ENCODE measurements at regions of chr6 and their contacts with region 1.

Region 1: DNA sequence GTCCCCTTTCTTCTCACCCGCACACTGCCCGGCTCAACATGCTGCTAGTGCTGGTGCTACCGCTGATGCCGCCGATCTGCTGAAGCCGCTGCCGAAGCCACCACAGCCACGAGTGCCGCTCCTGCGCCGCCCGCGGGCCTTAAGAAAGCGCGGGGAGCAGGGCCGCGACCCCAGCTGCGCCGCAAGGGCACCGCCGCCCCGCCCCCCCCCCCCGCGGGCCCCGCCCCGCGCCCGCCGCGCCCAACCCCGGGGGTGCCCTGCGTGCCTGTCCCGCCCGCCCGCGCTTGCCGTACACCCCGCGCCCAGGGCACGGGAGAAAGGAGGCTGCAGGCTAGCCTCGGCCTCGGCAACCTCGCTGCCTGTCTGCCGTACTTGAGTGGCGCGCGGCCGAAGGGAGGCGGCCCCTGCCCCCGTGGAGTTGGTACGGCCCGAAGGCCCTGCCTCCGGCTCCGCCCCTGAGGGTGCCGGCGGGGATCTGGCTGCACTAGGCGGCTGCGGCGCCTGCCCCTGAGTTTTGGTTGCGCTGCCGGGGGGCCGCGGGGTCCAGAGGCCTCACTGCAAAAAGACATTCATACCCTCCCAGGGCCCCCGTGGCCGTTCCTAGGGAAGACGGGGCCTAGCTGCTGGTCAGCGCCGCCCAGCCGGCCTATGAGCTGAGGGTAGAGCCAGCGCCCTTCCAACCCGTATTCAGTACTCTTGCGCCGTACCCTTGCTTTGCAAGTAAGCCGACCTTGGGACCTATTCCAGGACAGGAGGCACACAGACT is at the start of gene SOD2:
- DNase-seq: no peak
- ATAC-seq: peak; percentile 86
- H3K4me3 ChIP-seq: peak within 1 kb of the TSS; percentile 78
- H3K27ac ChIP-seq: peak within 1 kb of the TSS; percentile 88
- H3K4me1 ChIP-seq: peaks cover 10% of the 10 kb centered on the region
- H3K27me3 ChIP-seq: no peaks in the 10 kb centered on the region
- CTCF ChIP-seq: peak in 1 of 3 experiments; percentile 5; a peak in 1 of 6 replicates
- EP300 ChIP-seq: no peak
- POLR2A ChIP-seq: peak; percentile 96
- RAD21 ChIP-seq: no peak
- polyA plus RNA-seq, gene SOD2: 12.1 to 20.9 TPM

Region 2: DNA sequence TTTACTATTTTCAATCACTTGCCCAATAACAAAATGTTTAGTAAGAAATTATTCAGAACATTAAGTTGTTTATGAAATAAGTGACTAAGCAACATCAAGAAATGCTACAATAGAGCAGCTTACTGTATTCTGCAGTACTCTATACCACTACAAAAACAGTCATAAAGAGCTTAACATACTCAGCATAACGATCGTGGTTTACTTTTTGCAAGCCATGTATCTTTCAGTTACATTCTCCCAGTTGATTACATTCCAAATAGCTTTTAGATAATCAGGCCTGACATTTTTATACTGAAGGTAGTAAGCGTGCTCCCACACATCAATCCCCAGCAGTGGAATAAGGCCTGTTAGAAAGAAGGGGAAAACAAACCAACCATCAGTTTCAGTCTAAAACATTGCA is 11.0 kb before region 1 on chr6:
- CTCF ChIA-PET with region 1: interaction called, 10 read pairs
- POLR2A ChIA-PET with region 1: no interaction called
- RAD21 ChIA-PET with region 1: interaction called, 3 read pairs
- SMC1A ChIA-PET with region 1: interaction called, 9 read pairs
- in situ Hi-C with region 1: no loop called
- intact Hi-C with region 1: no loop called
- DNase-seq: no peak
- ATAC-seq: 0 out of 3 replicates have a peak, but pooled peaks have one; percentile 24
- H3K4me3 ChIP-seq: no peak overlapping the region
- H3K27ac ChIP-seq: no peak overlapping the region
- H3K4me1 ChIP-seq: no peaks in the 10 kb centered on the region
- H3K27me3 ChIP-seq: no peaks in the 10 kb centered on the region
- CTCF ChIP-seq: no peak
- EP300 ChIP-seq: no peak
- POLR2A ChIP-seq: no peak
- RAD21 ChIP-seq: no peak

Region 3: GRCh38 chr6:159726918-159727716 is 33.8 kb after region 1 on chr6 and contains the start of gene WTAP:
- CTCF ChIA-PET with region 1: interaction called, 27 read pairs
- POLR2A ChIA-PET with region 1: interaction called, 16 read pairs
- RAD21 ChIA-PET with region 1: interaction called, 6 read pairs
- SMC1A ChIA-PET with region 1: interaction called, 15 read pairs
- in situ Hi-C with region 1: no loop called
- intact Hi-C with region 1: loop called (anchors 2 kb)
- DNase-seq: peak; percentile 89
- ATAC-seq: peak; percentile 86
- H3K4me3 ChIP-seq: peak within 1 kb of the TSS; percentile 91
- H3K27ac ChIP-seq: peak within 1 kb of the TSS; percentile 97
- H3K4me1 ChIP-seq: no peaks in the 10 kb centered on the region
- H3K27me3 ChIP-seq: no peaks in the 10 kb centered on the region
- CTCF ChIP-seq: no peak
- EP300 ChIP-seq: no peak
- POLR2A ChIP-seq: peak; percentile 95
- RAD21 ChIP-seq: no peak
- polyA plus RNA-seq, gene WTAP: 102 to 132 TPM

Region 4: GRCh38 chr6:159789377-159790148 is 96.3 kb after region 1 on chr6 and contains the start of gene TCP1:
- CTCF ChIA-PET with region 1: interaction called, 46 read pairs
- POLR2A ChIA-PET with region 1: interaction called, 5 read pairs
- RAD21 ChIA-PET with region 1: interaction called, 10 read pairs
- SMC1A ChIA-PET with region 1: interaction called, 10 read pairs
- in situ Hi-C with region 1: no loop called
- intact Hi-C with region 1: loop called (anchors 2 kb)
- DNase-seq: peak; percentile 99
- ATAC-seq: peak; percentile 86
- H3K4me3 ChIP-seq: peak within 1 kb of the TSS; percentile 90
- H3K27ac ChIP-seq: peak within 1 kb of the TSS; percentile 87
- H3K4me1 ChIP-seq: no peaks in the 10 kb centered on the region; the same call in 1 of the 2 replicates
- H3K27me3 ChIP-seq: no peaks in the 10 kb centered on the region
- CTCF ChIP-seq: no peak
- EP300 ChIP-seq: peak in 1 of 2 experiments; percentile 88; a peak in 1 of 4 replicates
- POLR2A ChIP-seq: peak; percentile 99
- RAD21 ChIP-seq: no peak
- polyA plus RNA-seq, gene TCP1: 201 to 241 TPM

Region 5: DNA sequence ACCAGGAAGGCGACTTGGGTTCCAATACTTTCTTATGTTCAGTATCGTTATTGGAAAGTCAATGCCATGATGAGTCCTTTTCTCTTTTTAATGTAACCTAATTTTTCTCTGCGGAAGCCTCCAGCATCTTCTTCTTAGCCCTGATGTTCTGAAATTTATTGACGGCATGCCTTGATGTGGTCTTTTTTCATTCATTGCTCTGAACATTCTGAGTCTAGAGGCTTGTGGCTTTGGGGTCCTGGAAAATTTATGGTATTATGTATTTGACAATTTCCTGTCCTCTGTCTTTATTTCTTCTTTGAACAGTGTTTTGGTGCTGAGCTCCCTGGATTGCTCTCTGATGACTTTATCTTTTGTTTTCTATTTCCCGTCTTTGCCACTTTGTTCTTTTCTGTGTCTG is 168.8 kb after region 1 on chr6:
- CTCF ChIA-PET with region 1: interaction called, 8 read pairs
- POLR2A ChIA-PET with region 1: no interaction called
- RAD21 ChIA-PET with region 1: interaction called, 13 read pairs
- SMC1A ChIA-PET with region 1: interaction called, 8 read pairs
- in situ Hi-C with region 1: no loop called
- intact Hi-C with region 1: no loop called
- DNase-seq: no peak
- ATAC-seq: no peak
- H3K4me3 ChIP-seq: no peak overlapping the region
- H3K27ac ChIP-seq: no peak overlapping the region
- H3K4me1 ChIP-seq: no peaks in the 10 kb centered on the region
- H3K27me3 ChIP-seq: no peaks in the 10 kb centered on the region; a peak in 1 of 4 replicates
- CTCF ChIP-seq: no peak
- EP300 ChIP-seq: no peak
- POLR2A ChIP-seq: no peak
- RAD21 ChIP-seq: no peak

Region 6: GRCh38 chr6:160102956-160103824 is 409.9 kb after region 1 on chr6:
- CTCF ChIA-PET with region 1: no interaction called
- POLR2A ChIA-PET with region 1: no interaction called
- RAD21 ChIA-PET with region 1: no interaction called
- SMC1A ChIA-PET with region 1: no interaction called
- in situ Hi-C with region 1: no loop called
- intact Hi-C with region 1: loop called (anchors 10 kb)
- DNase-seq: no peak
- ATAC-seq: peak; percentile 82
- H3K4me3 ChIP-seq: no peak overlapping the region
- H3K27ac ChIP-seq: no peak overlapping the region
- H3K4me1 ChIP-seq: no peaks in the 10 kb centered on the region
- H3K27me3 ChIP-seq: no peaks in the 10 kb centered on the region
- CTCF ChIP-seq: peak; percentile 43 to 53 (median 43); a peak in 4 of 6 replicates
- EP300 ChIP-seq: no peak
- POLR2A ChIP-seq: no peak
- RAD21 ChIP-seq: peak; percentile 51

Measured in GM12878 (cell line).